PC-3 (cell line): ENCODE measurements at regions of chr7 and their contacts with region 1.

Region 1: GRCh38 chr7:81447351-81447952 is 322.4 kb downstream of the HGF start:
- DNase-seq: peak; percentile 75
- ATAC-seq: peak; percentile 96
- H3K4me3 ChIP-seq: no peak overlapping the region
- H3K27ac ChIP-seq: no peak overlapping the region
- H3K4me1 ChIP-seq: peaks cover 10% of the 10 kb centered on the region
- H3K27me3 ChIP-seq: no peaks in the 10 kb centered on the region
- CTCF ChIP-seq: peak; percentile 73

Region 2: GRCh38 chr7:81007051-81007450 is 440.4 kb before region 1 on chr7:
- CTCF ChIA-PET with region 1: no interaction called
- POLR2A ChIA-PET with region 1: no interaction called
- intact Hi-C with region 1: loop called (anchors 5 kb)
- DNase-seq: no peak
- ATAC-seq: no peak
- H3K4me3 ChIP-seq: no peak overlapping the region
- H3K27ac ChIP-seq: no peak overlapping the region
- H3K4me1 ChIP-seq: peaks cover 12% of the 10 kb centered on the region
- H3K27me3 ChIP-seq: no peaks in the 10 kb centered on the region
- CTCF ChIP-seq: no peak

Region 3: DNA sequence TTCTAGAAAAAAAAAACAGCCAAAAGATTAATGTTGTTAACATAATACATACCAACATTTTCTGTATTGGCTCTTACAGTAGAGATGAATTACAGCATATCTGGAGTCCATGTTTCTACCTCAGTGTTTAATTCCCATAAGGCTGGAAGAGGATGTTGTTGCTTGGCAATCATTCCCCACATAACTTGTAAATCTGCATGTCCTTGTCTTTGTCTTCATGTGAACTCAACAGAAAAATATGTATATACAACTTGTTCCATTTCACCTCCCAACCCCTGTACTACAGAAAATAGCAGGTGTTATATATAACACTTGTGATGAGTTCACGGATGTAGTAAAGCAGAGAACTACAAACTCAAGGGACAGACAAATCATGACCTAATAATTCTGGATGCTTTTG is 367.7 kb before region 1 on chr7:
- CTCF ChIA-PET with region 1: no interaction called
- POLR2A ChIA-PET with region 1: no interaction called
- intact Hi-C with region 1: loop called (anchors 10 kb)
- DNase-seq: no peak
- ATAC-seq: no peak
- H3K4me3 ChIP-seq: no peak overlapping the region
- H3K27ac ChIP-seq: no peak overlapping the region
- H3K4me1 ChIP-seq: peaks cover 10% of the 10 kb centered on the region
- H3K27me3 ChIP-seq: no peaks in the 10 kb centered on the region
- CTCF ChIP-seq: no peak

Region 4: DNA sequence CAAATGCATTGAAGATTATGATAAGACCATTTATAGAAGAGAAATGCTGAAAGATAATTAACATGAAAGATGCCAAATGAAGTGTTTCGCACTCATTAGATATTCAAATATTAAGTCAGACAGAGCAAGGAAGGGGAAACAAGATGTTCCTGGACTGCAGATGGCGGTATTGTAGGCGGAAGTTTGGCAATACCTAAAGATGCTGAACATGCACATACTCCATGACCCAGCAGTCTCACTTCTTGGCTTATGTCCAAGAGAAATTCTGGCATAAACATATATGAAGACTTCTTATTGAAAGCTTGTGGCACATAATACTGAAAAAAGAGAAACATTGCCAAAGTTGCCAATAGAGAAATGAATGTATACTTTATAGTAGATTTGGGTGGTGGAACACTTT is 203.2 kb before region 1 on chr7:
- CTCF ChIA-PET with region 1: no interaction called
- POLR2A ChIA-PET with region 1: no interaction called
- intact Hi-C with region 1: loop called (anchors 10 kb)
- DNase-seq: peak; percentile 16
- ATAC-seq: no peak
- H3K4me3 ChIP-seq: no peak overlapping the region
- H3K27ac ChIP-seq: no peak overlapping the region
- H3K4me1 ChIP-seq: peaks cover 12% of the 10 kb centered on the region
- H3K27me3 ChIP-seq: no peaks in the 10 kb centered on the region
- CTCF ChIP-seq: peak; percentile 43; the same call in 1 of the 2 replicates

Region 5: GRCh38 chr7:81410471-81411125 is 36.9 kb before region 1 on chr7:
- CTCF ChIA-PET with region 1: no interaction called
- POLR2A ChIA-PET with region 1: no interaction called
- intact Hi-C with region 1: loop called (anchors 1 kb)
- DNase-seq: peak; percentile 94
- ATAC-seq: peak; percentile 60
- H3K4me3 ChIP-seq: peak overlapping the region; percentile 24
- H3K27ac ChIP-seq: peak overlapping the region; percentile 89
- H3K4me1 ChIP-seq: peaks cover 64% of the 10 kb centered on the region
- H3K27me3 ChIP-seq: no peaks in the 10 kb centered on the region
- CTCF ChIP-seq: no peak